PC-3 (cell line): ENCODE measurements at regions of chr1 and their contacts with region 1.

Region 1: DNA sequence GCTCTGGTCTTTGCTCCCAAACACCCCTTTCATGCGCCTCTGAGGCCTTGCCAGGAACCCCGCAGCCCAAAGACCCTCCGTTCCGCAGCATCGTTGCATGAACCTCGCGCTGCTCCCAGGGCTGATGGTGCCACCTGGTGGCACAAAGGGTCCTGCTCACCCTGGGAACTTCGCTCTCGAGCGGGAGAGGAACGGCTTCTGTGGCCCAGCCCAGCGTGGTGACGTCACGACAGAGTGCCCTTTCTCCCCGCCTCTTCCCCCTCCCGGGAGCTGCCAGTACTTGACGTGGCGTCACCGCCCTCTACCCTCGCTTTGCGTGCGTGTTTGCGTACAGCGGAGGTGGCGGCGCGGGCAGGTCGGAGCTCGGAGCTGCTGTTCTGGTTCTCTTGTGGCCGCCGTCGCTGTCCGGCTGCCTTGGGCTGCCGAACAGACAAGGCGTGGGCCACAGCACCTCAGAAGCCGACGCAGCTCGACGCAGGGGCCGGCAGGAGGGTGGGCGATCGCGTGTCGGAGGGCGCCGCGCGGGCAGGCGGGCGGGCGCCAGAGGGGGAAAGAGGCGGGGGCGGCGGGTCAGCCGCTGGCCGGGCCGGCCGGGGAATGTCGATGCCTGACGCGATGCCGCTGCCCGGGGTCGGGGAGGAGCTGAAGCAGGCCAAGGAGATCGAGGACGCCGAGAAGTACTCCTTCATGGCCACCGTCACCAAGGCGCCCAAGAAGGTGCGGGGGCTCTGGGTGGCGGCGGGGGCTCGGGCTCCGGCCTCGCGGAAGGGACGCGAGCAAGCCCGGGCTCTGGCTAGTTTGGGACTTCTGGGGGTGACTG is at the start of gene AHCYL1:
- DNase-seq: peak; percentile 99
- ATAC-seq: peak; percentile 86
- H3K4me3 ChIP-seq: peak within 1 kb of the TSS; percentile 84
- H3K27ac ChIP-seq: peak within 1 kb of the TSS; percentile 43
- H3K4me1 ChIP-seq: peaks cover 58% of the 10 kb centered on the region
- H3K27me3 ChIP-seq: no peaks in the 10 kb centered on the region
- CTCF ChIP-seq: peak; percentile 94
- total RNA-seq, gene AHCYL1: 35.8 and 40.9 TPM in 2 replicates

Region 2: DNA sequence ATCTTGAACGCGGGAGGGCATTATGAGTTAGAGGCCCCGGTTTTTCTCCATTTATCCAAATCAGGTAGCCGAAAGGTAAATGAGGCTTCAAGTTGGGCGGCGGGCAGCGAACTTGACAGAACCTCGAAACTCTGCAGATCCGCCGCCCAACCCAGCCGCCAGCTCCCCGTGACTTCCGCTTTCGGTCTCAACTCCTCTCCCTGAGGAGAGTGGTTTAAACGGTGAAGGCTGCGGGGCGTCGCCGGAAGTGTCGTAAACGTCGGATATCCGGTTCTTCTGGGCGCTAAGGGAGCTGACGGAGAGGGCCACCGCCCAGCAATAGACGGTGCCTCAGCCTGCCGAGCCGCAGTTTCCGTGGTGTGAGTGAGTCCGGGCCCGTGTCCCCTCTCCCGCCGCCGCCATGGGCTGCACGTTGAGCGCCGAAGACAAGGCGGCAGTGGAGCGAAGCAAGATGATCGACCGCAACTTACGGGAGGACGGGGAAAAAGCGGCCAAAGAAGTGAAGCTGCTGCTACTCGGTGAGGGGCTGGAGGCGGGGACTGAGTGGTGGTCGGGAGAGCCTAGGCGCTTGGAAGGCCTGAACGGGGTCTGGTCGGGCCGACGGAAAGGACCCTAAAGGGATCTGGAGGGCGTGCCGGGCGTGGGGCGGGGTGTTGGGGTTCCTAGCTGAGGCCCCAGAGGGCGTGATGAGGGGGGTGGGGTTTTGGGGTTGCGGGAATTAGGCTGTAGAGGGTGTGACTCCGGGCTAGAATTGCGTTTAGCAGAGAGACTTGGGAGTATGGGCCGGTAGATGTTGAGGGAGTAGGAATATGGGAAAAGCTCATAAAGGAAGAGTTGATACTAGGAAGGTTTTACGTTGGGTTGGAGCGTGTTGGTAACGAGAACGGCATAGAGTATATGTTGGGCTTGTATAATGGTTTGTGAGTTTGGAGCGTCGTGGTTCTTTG is 436.1 kb before region 1 on chr1 and contains the start of gene GNAI3:
- CTCF ChIA-PET with region 1: interaction called, 5 read pairs
- POLR2A ChIA-PET with region 1: no interaction called
- intact Hi-C with region 1: loop called (anchors 5 kb)
- DNase-seq: peak; percentile 97
- ATAC-seq: peak; percentile 92
- H3K4me3 ChIP-seq: peak within 1 kb of the TSS; percentile 93
- H3K27ac ChIP-seq: peak within 1 kb of the TSS; percentile 62
- H3K4me1 ChIP-seq: peaks cover 26% of the 10 kb centered on the region
- H3K27me3 ChIP-seq: no peaks in the 10 kb centered on the region
- CTCF ChIP-seq: no peak
- total RNA-seq, gene GNAI3: 6.7 and 6.8 TPM in 2 replicates

Region 3: GRCh38 chr1:109773146-109773899 is 211.3 kb before region 1 on chr1:
- CTCF ChIA-PET with region 1: interaction called, 59 read pairs
- POLR2A ChIA-PET with region 1: no interaction called
- intact Hi-C with region 1: loop called (anchors 1 kb)
- DNase-seq: peak; percentile 88
- ATAC-seq: peak; percentile 88
- H3K4me3 ChIP-seq: no peak overlapping the region
- H3K27ac ChIP-seq: no peak overlapping the region
- H3K4me1 ChIP-seq: peaks cover 14% of the 10 kb centered on the region; the same call in 1 of the 2 replicates
- H3K27me3 ChIP-seq: no peaks in the 10 kb centered on the region
- CTCF ChIP-seq: peak; percentile 97

Region 4: GRCh38 chr1:109931189-109931731 is 53.4 kb before region 1 on chr1:
- CTCF ChIA-PET with region 1: interaction called, 3 read pairs
- POLR2A ChIA-PET with region 1: no interaction called
- intact Hi-C with region 1: loop called (anchors 5 kb)
- DNase-seq: peak; percentile 42
- ATAC-seq: peak; percentile 59
- H3K4me3 ChIP-seq: no peak overlapping the region
- H3K27ac ChIP-seq: no peak overlapping the region
- H3K4me1 ChIP-seq: peaks cover 7% of the 10 kb centered on the region; the same call in 1 of the 2 replicates
- H3K27me3 ChIP-seq: no peaks in the 10 kb centered on the region
- CTCF ChIP-seq: no peak

Region 5: GRCh38 chr1:110011527-110012041 is 26.9 kb after region 1 on chr1:
- CTCF ChIA-PET with region 1: interaction called, 14 read pairs
- POLR2A ChIA-PET with region 1: no interaction called
- intact Hi-C with region 1: loop called (anchors 1 kb)
- DNase-seq: peak; percentile 71
- ATAC-seq: peak; percentile 99
- H3K4me3 ChIP-seq: no peak overlapping the region
- H3K27ac ChIP-seq: no peak overlapping the region
- H3K4me1 ChIP-seq: no peaks in the 10 kb centered on the region
- H3K27me3 ChIP-seq: no peaks in the 10 kb centered on the region
- CTCF ChIP-seq: peak; percentile 78

Region 6: GRCh38 chr1:110455151-110455550 is 470.5 kb after region 1 on chr1:
- CTCF ChIA-PET with region 1: no interaction called
- POLR2A ChIA-PET with region 1: no interaction called
- intact Hi-C with region 1: no loop called
- DNase-seq: no peak
- ATAC-seq: no peak
- H3K4me3 ChIP-seq: no peak overlapping the region
- H3K27ac ChIP-seq: no peak overlapping the region
- H3K4me1 ChIP-seq: no peaks in the 10 kb centered on the region
- H3K27me3 ChIP-seq: peaks cover 39% of the 10 kb centered on the region
- CTCF ChIP-seq: no peak